ENCODE measurements at regions of chr21 and their contacts with region 1.

Region 1: GRCh38 chr21:34305605-34306604 is 57.9 kb upstream of the KCNE2 start:
- DNase-seq: no peak
- ATAC-seq: no peak
- H3K4me3 ChIP-seq: no peak overlapping the region
- H3K27ac ChIP-seq: no peak overlapping the region
- H3K4me1 ChIP-seq: no peaks in the 10 kb centered on the region
- H3K27me3 ChIP-seq: no peaks in the 10 kb centered on the region
- CTCF ChIP-seq: no peak
- POLR2A ChIP-seq: no peak

Region 2: GRCh38 chr21:34243562-34243961 is 62.3 kb before region 1 on chr21:
- in situ Hi-C with region 1: no loop called
- intact Hi-C with region 1: loop called (anchors 10 kb)
- DNase-seq: no peak
- ATAC-seq: peak in 1 of 2 donors; percentile 51
- H3K4me3 ChIP-seq: no peak overlapping the region
- H3K27ac ChIP-seq: no peak overlapping the region
- H3K4me1 ChIP-seq: no peaks in the 10 kb centered on the region
- H3K27me3 ChIP-seq: no peaks in the 10 kb centered on the region
- CTCF ChIP-seq: peak in 1 of 5 experiments; percentile 16
- POLR2A ChIP-seq: no peak

Region 3: GRCh38 chr21:34255073-34255472 is 50.8 kb before region 1 on chr21:
- in situ Hi-C with region 1: no loop called
- intact Hi-C with region 1: no loop called
- DNase-seq: no peak
- ATAC-seq: no peak
- H3K4me3 ChIP-seq: no peak overlapping the region
- H3K27ac ChIP-seq: no peak overlapping the region
- H3K4me1 ChIP-seq: no peaks in the 10 kb centered on the region
- H3K27me3 ChIP-seq: no peaks in the 10 kb centered on the region
- CTCF ChIP-seq: no peak
- POLR2A ChIP-seq: no peak

Region 4: GRCh38 chr21:34330055-34330454 is 24.1 kb after region 1 on chr21:
- in situ Hi-C with region 1: no loop called
- intact Hi-C with region 1: no loop called
- DNase-seq: no peak
- ATAC-seq: no peak
- H3K4me3 ChIP-seq: no peak overlapping the region
- H3K27ac ChIP-seq: no peak overlapping the region
- H3K4me1 ChIP-seq: no peaks in the 10 kb centered on the region
- H3K27me3 ChIP-seq: no peaks in the 10 kb centered on the region
- CTCF ChIP-seq: no peak
- POLR2A ChIP-seq: no peak